Naive thymus-derived CD4-positive, alpha-beta T cell (primary cell): ENCODE measurements at regions of chr1 and their contacts with region 1.

Region 1: DNA sequence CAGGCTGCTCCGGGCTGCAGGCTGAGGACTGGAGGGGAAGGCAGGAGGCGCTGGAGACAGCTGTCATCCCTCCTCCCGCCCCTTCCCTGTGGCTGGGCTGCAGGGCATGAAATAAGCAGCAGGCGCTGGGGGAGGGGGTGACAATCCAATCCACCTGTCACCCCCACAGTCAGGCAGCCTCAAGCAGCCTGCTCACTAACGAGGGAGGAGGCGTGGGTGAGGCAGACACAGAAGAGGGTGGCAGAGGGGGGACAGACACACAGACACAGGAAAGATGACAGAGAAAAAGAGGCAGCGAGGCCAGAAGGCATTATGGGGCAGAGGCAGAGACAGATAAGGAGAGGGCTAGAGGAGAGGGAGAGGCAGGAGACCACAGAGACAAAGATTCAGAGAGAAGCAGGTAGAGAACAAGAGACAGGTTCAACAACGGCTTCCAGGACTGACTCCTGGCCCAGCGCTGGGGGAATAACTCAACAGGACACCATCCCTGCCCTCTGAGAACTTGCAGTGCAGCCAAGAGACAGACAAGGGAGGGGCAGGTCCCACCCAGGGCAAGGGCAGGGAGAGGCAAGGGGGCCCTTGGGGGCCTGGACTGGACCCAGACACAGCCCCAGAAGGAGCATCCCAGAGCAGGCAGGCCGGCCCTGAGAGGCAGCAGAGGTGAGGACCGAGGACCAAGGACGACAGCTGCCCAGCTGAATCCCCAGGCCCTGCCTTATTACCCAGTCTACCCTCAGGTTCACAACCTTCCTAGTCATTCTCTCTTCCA is 11.2 kb downstream of the MEF2D start:
- DNase-seq: peak in 6 of 9 donors; percentile 23 to 53 (median 36)
- ATAC-seq: peak; percentile 53
- H3K4me3 ChIP-seq: peak overlapping the region; percentile 26
- H3K4me3 Mint-ChIP-seq: peak overlapping the region; percentile 74 to 88 (median 80)
- H3K27ac ChIP-seq: peak overlapping the region; percentile 59
- H3K27ac Mint-ChIP-seq: peak overlapping the region; percentile 65 to 99 (median 94)
- H3K4me1 ChIP-seq: peaks cover 75 to 92% of the 10 kb centered on the region in 2 donors
- H3K4me1 Mint-ChIP-seq: peaks cover 78 to 97% (median 90%) of the 10 kb centered on the region in 7 donors
- H3K27me3 ChIP-seq: no peaks in the 10 kb centered on the region
- H3K27me3 Mint-ChIP-seq: no peaks in the 10 kb centered on the region

Region 2: DNA sequence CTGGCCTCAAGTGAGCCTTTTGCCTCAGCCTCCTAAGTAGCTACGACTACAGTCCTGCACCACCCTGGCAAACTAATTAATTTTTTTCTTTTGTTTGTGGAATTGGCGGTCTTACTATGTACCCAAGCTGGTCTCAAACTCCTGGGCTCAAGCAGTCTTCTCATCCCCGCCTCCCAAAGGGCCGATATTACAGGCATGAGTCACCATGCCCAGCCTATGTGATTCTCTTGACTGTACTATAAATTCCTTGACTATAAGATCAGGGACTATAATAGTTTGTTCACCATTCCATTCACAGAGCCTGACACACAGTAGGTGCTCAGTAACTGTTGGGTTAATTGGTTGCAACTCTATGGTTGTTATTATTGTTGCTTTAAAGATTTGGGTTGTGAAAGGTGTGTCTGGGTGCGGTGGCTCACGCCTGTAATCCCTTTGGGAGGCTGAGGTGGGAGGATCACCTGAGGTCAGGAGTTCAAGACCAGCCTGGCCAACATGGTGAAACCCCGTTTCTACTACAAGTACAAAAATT is 783.2 kb before region 1 on chr1:
- CTCF ChIA-PET with region 1: no interaction called
- POLR2A ChIA-PET with region 1: no interaction called
- intact Hi-C with region 1: no loop called
- DNase-seq: no peak
- ATAC-seq: no peak
- H3K4me3 ChIP-seq: no peak overlapping the region
- H3K4me3 Mint-ChIP-seq: no peak overlapping the region
- H3K27ac ChIP-seq: no peak overlapping the region
- H3K27ac Mint-ChIP-seq: peak overlapping the region in 2 of 9 donors; percentile 28 to 56
- H3K4me1 ChIP-seq: no peaks in the 10 kb centered on the region
- H3K4me1 Mint-ChIP-seq: peaks cover 5 to 34% (median 26%) of the 10 kb centered on the region in 7 donors
- H3K27me3 ChIP-seq: no peaks in the 10 kb centered on the region
- H3K27me3 Mint-ChIP-seq: no peaks in the 10 kb centered on the region

Region 3: DNA sequence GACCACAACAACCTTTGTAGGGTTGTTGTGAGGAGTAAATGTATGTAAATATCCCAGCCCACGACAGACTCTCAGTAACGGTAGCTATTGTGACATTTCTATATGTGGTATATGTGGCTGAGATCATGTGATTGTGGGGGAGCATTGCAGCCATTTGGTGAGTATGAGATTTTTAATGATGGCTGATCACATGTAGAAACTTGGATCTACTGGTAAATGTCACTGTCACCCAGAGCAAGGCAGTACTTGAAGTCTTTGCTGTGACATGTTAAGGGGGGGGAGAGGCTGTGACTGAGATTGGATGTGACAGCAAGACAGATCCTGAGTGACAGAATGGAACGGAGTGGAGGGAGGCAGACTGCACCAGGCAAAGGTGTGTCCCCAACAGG is 35.1 kb after region 1 on chr1:
- CTCF ChIA-PET with region 1: interaction called, 3 read pairs
- POLR2A ChIA-PET with region 1: interaction called, 5 read pairs
- intact Hi-C with region 1: loop called (anchors 5 kb)
- DNase-seq: peak in 1 of 9 donors; percentile 14
- ATAC-seq: peak; percentile 71
- H3K4me3 ChIP-seq: no peak overlapping the region
- H3K4me3 Mint-ChIP-seq: peak overlapping the region in 9 of 10 donors; percentile 27 to 71 (median 58)
- H3K27ac ChIP-seq: no peak overlapping the region
- H3K27ac Mint-ChIP-seq: peak overlapping the region; percentile 4 to 86 (median 57)
- H3K4me1 ChIP-seq: peaks cover 23 to 31% of the 10 kb centered on the region in 2 donors
- H3K4me1 Mint-ChIP-seq: peaks cover 34 to 43% (median 36%) of the 10 kb centered on the region in 7 donors
- H3K27me3 ChIP-seq: no peaks in the 10 kb centered on the region
- H3K27me3 Mint-ChIP-seq: no peaks in the 10 kb centered on the region

Region 4: GRCh38 chr1:156539818-156540355 is 50.5 kb after region 1 on chr1:
- CTCF ChIA-PET with region 1: no interaction called
- POLR2A ChIA-PET with region 1: no interaction called
- intact Hi-C with region 1: loop called in 1 of 2 experiments (anchors 5 kb)
- DNase-seq: no peak
- ATAC-seq: no peak
- H3K4me3 ChIP-seq: no peak overlapping the region
- H3K4me3 Mint-ChIP-seq: no peak overlapping the region
- H3K27ac ChIP-seq: no peak overlapping the region
- H3K27ac Mint-ChIP-seq: peak overlapping the region in 1 of 9 donors; percentile 19
- H3K4me1 ChIP-seq: no peaks in the 10 kb centered on the region
- H3K4me1 Mint-ChIP-seq: peaks cover 0 to 10% (median 0%) of the 10 kb centered on the region in 7 donors
- H3K27me3 ChIP-seq: no peaks in the 10 kb centered on the region
- H3K27me3 Mint-ChIP-seq: no peaks in the 10 kb centered on the region

Region 5: DNA sequence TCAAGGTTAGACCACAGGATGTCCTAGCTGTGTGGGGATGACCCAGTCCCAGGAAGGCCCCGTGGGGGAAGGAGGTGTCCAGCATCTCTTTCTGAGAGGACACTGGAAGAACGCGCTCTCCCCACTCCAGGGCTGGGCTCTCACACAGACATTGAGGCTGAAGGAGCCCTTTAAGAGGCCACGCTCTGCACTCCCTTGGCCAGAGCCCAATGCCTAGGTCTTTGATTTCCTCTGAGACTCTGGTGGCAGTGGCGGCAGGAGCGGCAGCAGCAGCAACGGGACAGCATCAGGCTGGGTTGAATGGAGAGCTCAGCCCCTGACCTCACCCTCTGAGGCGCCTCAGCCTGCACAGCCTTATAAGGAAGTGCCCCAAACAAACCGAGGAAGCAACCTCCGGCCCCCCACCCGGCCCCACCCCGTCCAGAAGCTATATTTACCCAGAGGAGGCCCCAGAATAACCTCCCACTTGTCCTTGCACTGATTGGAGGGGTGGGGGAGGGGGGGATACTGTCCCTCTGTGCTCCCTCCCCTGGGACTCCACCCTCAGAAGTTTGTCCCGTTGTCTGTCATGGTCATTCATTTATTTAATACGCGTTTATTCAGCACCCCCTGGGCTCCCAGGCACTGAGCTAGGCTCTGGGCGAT is 175.5 kb after region 1 on chr1:
- CTCF ChIA-PET with region 1: no interaction called
- POLR2A ChIA-PET with region 1: no interaction called
- intact Hi-C with region 1: no loop called
- DNase-seq: no peak
- ATAC-seq: no peak
- H3K4me3 ChIP-seq: no peak overlapping the region
- H3K4me3 Mint-ChIP-seq: no peak overlapping the region
- H3K27ac ChIP-seq: no peak overlapping the region
- H3K27ac Mint-ChIP-seq: peak overlapping the region in 2 of 9 donors; percentile 1 to 20
- H3K4me1 ChIP-seq: peaks cover 15 to 19% of the 10 kb centered on the region in 2 donors
- H3K4me1 Mint-ChIP-seq: peaks cover 13 to 45% (median 22%) of the 10 kb centered on the region in 7 donors
- H3K27me3 ChIP-seq: no peaks in the 10 kb centered on the region
- H3K27me3 Mint-ChIP-seq: peaks cover 0 to 21% (median 0%) of the 10 kb centered on the region in 5 donors

Region 6: DNA sequence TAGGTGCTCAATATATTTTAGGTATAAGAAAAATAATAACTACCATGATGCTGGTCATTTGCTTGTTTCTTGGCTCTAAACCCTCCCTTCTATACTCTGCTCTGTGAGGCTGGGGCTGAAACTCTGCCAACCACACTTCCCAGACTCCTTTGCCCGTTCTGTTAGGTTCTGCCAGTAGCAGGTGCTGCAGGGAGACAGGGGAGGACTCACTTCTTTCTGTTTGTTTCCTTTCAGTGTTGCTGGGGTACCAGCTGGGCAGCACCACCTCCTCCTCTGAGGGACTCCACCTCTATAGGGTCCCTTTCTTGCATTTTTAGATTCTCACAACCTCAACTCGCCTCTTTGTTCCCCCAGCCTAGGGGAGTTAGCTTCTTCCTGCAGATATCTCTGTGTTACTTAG is 344.3 kb after region 1 on chr1:
- CTCF ChIA-PET with region 1: no interaction called
- POLR2A ChIA-PET with region 1: no interaction called
- intact Hi-C with region 1: no loop called
- DNase-seq: peak in 2 of 9 donors; percentile 21 to 24
- ATAC-seq: peak; percentile 57
- H3K4me3 ChIP-seq: no peak overlapping the region
- H3K4me3 Mint-ChIP-seq: no peak overlapping the region
- H3K27ac ChIP-seq: no peak overlapping the region
- H3K27ac Mint-ChIP-seq: peak overlapping the region in 2 of 9 donors; percentile 5 to 79
- H3K4me1 ChIP-seq: peaks cover 0 to 8% of the 10 kb centered on the region in 2 donors
- H3K4me1 Mint-ChIP-seq: peaks cover 0 to 50% (median under 1%) of the 10 kb centered on the region in 7 donors
- H3K27me3 ChIP-seq: no peaks in the 10 kb centered on the region
- H3K27me3 Mint-ChIP-seq: peaks cover 0 to 19% (median 12%) of the 10 kb centered on the region in 5 donors